Left cardiac atrium (tissue), 4 donors: ENCODE measurements at regions of chr13 and their contacts with region 1.

Region 1: GRCh38 chr13:32246468-32246867 is 68.7 kb downstream of the ZAR1L start:
- DNase-seq: peak; percentile 65
- ATAC-seq: peak; percentile 89 to 94

Region 2: DNA sequence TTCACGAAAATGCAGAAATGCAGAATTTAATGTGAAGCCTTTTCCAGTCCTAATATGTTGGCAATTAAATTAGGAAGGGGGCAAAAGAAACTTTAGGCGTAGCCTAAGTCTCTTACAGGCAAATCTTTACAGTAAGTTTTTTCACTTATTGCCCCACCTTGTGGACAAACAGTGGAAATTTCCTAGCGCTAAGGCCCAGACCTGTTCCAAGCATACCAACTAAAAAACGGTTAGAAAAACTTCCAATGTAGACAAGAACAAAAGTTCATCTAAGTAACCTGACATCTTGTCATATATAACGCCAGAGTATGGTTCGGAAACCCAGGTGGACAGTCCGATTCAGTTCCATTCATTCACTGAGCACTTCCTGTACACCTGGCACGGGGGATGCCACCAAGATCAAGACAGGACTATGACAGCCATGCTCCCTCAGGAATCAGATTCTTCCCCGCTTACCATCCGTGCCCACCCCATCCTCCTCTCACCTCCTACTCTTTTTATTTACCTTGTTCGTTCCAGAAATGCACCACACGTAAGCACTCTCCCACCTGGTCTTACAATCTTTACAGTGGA is 63.8 kb after region 1 on chr13:
- intact Hi-C with region 1: loop called (anchors 2 to 10 kb)
- DNase-seq: no peak
- ATAC-seq: peak; percentile 75 to 84